ENCODE measurements at regions of chr4 and their contacts with region 1.

Region 1: DNA sequence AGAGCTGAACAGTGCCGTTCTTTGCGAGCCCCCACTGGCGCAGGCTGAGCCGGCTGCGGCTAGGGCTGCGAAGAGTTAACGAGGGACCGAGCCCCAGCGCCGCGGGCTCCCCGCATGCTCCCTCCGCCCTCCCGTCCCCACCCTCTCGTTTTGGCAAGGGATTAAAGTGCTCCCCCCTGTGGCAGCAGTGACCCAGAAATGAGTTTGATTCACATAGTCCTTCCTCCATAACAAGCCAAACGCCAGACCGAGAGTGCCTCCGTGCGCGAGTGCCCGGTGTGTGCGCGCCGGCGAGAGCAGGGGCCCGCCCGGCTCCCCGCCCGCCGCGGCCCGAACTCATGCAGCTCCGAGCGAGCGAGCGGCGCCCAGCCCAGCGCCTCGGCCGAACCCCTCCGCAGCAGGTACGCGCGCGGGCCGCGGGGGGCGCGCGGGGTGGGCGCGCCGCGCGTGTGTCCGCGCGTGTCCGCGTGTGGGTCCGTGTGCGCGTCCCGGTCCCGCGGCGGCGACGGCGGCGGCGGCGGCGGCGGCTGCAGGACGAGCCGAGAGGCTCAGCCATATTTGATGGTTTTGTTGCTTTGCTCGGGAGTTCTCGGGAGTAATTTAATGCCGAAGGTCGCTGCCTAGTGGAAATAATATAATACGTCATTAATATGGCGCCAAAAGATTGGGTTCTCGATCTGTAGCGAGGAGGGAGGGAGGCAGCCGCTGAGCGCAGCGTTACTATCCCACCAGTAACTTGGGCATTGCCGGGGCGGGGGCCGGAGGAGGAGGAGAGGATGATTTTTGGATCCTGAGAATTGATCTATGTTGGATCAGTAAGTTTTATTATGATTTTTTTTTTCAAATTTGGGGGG is at the start of gene JADE1:
- DNase-seq: peak; percentile 96
- H3K4me3 Mint-ChIP-seq: peak within 1 kb of the TSS; percentile 93
- H3K27ac Mint-ChIP-seq: peak within 1 kb of the TSS; percentile 91
- H3K4me1 Mint-ChIP-seq: peaks cover 10% of the 10 kb centered on the region
- H3K27me3 Mint-ChIP-seq: no peaks in the 10 kb centered on the region
- CTCF ChIP-seq: peak; percentile 45
- total RNA-seq, gene JADE1: 22.7 and 25.9 TPM in 2 replicates

Region 2: DNA sequence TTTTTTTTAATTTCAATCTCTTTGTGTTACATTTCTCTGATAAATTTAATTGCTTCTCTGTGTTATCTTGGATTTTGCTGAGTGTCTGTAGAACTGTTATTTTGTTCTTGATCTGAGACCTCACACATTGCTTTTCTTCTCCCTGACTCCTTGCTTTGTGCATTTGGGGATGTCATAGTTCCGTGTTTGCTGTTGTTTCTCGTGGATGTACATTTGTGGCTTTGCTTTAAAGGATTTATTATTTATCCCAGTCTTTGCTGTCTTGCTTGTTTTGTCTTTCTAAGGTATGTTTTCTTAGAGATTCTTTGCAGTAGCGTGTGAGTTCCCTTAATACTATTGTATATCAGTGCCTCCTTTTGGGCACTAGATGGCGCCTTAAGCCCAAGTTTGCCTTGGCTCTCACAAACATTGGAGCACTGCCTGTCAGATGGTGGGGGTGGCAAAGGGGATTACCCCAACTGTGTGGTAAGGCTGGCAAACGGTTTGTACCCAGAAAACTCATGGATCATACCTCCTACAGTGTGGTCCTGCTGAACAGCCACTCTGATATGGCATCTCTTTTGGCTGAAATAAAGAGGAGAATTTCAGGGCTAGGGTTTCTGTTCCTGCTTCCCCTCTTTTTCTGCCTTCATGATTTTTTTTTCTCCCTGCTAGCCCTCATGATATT is 618.5 kb before region 1 on chr4:
- CTCF ChIA-PET with region 1: interaction called, 7 read pairs
- POLR2A ChIA-PET with region 1: no interaction called
- intact Hi-C with region 1: loop called (anchors 1 kb)
- DNase-seq: peak; percentile 81
- H3K4me3 Mint-ChIP-seq: no peak overlapping the region
- H3K27ac Mint-ChIP-seq: no peak overlapping the region
- H3K4me1 Mint-ChIP-seq: peaks cover 6% of the 10 kb centered on the region
- H3K27me3 Mint-ChIP-seq: no peaks in the 10 kb centered on the region
- CTCF ChIP-seq: peak; percentile 77

Region 3: GRCh38 chr4:128427832-128428366 is 381.8 kb before region 1 on chr4:
- CTCF ChIA-PET with region 1: interaction called, 5 read pairs
- POLR2A ChIA-PET with region 1: interaction called, 6 read pairs
- intact Hi-C with region 1: loop called (anchors 1 kb)
- DNase-seq: peak; percentile 88
- H3K4me3 Mint-ChIP-seq: peak overlapping the region; percentile 47
- H3K27ac Mint-ChIP-seq: no peak overlapping the region
- H3K4me1 Mint-ChIP-seq: peaks cover 22% of the 10 kb centered on the region
- H3K27me3 Mint-ChIP-seq: no peaks in the 10 kb centered on the region
- CTCF ChIP-seq: peak; percentile 42

Region 4: GRCh38 chr4:128574706-128575105 is 235.0 kb before region 1 on chr4:
- CTCF ChIA-PET with region 1: interaction called, 14 read pairs
- POLR2A ChIA-PET with region 1: interaction called, 6 read pairs
- intact Hi-C with region 1: loop called (anchors 1 kb)
- DNase-seq: peak; percentile 79
- H3K4me3 Mint-ChIP-seq: no peak overlapping the region
- H3K27ac Mint-ChIP-seq: no peak overlapping the region
- H3K4me1 Mint-ChIP-seq: peaks cover 32% of the 10 kb centered on the region
- H3K27me3 Mint-ChIP-seq: no peaks in the 10 kb centered on the region
- CTCF ChIP-seq: peak; percentile 61

Region 5: GRCh38 chr4:128823025-128823661 is 13.4 kb after region 1 on chr4:
- CTCF ChIA-PET with region 1: interaction called, 4 read pairs
- POLR2A ChIA-PET with region 1: interaction called, 42 read pairs
- intact Hi-C with region 1: no loop called
- DNase-seq: peak; percentile 67
- H3K4me3 Mint-ChIP-seq: no peak overlapping the region
- H3K27ac Mint-ChIP-seq: peak overlapping the region; percentile 74
- H3K4me1 Mint-ChIP-seq: peaks cover 36% of the 10 kb centered on the region
- H3K27me3 Mint-ChIP-seq: no peaks in the 10 kb centered on the region
- CTCF ChIP-seq: no peak

Region 6: DNA sequence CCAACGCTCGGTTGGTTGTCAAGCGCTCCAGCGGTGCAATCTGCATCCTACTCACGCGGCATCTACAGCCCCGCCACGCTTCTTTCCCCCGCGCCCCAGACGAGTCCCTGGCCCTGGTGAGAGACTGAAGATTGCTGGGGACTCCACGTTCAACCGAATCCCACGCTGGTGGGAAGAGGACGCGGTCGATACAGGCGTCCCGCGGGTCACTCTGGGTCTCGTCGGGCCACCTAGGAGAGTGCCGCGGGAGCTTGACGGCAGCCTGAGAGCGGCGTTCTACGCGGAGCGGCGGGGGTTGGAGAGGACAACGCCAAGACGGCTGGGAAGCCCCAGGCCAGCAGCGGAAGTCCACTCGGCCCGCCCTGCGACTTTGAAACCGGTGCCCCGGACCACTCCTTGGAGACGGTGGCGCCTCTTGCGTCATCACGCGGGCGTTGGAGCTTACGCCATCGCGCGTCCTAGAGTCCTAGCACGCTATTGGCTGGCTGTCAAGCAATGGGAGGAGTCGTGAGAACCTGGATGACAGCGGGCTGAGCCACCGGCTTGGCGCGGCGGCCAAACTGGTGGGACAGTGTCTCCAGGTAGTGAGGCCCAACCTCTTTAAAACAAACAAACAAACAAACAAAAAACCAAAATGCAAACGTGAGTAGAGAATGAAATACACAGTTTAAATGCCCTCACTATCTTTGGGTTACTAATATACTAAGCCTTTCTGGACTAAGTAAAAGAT is 283.7 kb after region 1 on chr4 and contains the start of gene SCLT1:
- CTCF ChIA-PET with region 1: no interaction called
- POLR2A ChIA-PET with region 1: interaction called, 6 read pairs
- intact Hi-C with region 1: loop called (anchors 5 kb)
- DNase-seq: peak; percentile 100
- H3K4me3 Mint-ChIP-seq: no peak within 1 kb of the TSS
- H3K27ac Mint-ChIP-seq: no peak within 1 kb of the TSS
- H3K4me1 Mint-ChIP-seq: peaks cover 13% of the 10 kb centered on the region
- H3K27me3 Mint-ChIP-seq: no peaks in the 10 kb centered on the region
- CTCF ChIP-seq: no peak
- total RNA-seq, gene SCLT1: 16.2 and 20.7 TPM in 2 replicates

Region 7: DNA sequence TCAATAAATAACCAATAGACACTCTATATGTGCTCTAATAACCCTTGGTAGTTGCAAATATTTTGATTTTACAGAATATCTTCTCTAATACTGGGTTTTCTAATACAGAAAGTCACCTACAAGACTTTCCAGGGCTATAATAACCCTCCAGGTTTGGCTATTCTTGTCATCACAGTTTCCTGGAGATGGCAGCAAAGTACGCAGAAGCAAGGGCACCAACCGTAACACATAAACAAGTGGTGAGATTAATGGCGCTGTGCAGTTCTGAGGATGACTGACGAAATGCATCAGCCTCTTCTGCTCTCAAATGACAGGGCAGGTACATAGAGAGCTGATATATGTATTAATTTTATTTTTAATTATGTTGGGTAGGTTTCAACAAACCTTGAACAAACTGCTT is 408.7 kb after region 1 on chr4:
- CTCF ChIA-PET with region 1: no interaction called
- POLR2A ChIA-PET with region 1: no interaction called
- intact Hi-C with region 1: no loop called
- DNase-seq: no peak
- H3K4me3 Mint-ChIP-seq: no peak overlapping the region
- H3K27ac Mint-ChIP-seq: no peak overlapping the region
- H3K4me1 Mint-ChIP-seq: no peaks in the 10 kb centered on the region
- H3K27me3 Mint-ChIP-seq: no peaks in the 10 kb centered on the region
- CTCF ChIP-seq: no peak